Sigmoid colon (tissue), 7 donors: ENCODE measurements at regions of chr12 and their contacts with region 1.

Region 1: DNA sequence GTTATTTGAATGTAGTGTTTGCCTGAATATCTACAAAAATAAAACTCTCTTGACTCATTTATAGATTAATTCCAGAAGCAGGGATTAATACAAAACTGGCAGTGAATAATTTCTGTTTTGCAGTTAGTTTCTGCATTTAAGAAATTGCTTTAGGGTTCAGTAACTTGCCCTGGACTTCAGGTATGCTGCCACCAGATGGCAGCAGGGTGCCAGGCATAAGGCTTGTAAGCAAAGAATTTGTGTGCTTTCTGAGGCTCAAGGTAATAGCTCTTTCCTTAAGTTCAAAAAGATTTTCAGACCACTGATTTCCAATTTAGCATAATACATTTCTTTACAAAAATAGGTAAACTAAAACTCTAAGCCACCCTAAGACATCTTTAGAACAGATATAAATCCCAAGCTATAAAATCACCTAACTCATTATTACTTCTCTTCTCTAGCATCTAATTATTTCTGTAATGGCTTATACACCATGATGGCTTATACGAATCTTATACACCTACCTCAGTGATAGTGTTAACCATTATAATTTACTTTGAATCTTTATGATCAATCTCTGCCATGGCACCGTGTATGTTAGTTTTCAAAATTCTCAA is 398.3 kb downstream of the APAF1 start:
- DNase-seq: no peak
- H3K4me3 ChIP-seq: no peak overlapping the region
- H3K27ac ChIP-seq: no peak overlapping the region
- H3K4me1 ChIP-seq: no peaks in the 10 kb centered on the region
- H3K27me3 ChIP-seq: no peaks in the 10 kb centered on the region
- CTCF ChIP-seq: peak; percentile 29 to 84 (median 67)
- EP300 ChIP-seq: no peak
- POLR2A ChIP-seq: no peak

Region 2: DNA sequence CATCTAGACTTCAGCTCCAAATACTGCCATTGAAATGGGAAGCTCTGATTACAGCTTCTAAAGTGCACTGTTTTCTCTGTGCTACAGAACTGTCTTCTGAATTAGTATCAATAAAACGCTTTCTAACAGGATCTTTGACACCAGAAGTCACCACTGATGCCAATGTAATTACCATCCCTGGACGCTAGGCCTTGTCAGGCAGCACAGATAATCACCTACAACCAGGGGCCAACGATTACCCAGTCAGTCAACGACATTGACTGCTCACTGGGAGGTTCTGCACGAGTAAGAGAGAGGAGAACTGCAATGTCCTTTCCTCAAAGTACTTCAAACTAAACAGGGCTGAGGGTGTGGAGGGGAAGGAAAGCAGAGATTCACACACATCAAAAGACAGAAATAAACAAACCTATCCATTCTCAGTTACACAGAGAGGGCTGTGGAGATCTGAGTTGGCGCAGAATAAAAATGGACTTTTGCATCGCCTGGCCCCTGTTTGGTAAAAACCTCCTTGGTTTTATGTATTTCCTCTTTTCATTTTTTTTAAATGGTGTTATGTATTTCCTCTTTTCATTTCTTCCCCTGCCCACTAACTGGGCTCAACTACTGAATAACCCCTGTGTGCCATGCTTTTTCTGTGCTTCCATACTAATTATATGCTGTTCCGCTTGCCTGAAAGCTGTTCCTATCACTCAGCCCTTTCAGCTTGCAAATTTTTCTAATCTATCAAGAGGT is 93.9 kb after region 1 on chr12:
- intact Hi-C with region 1: no loop called
- DNase-seq: no peak
- H3K4me3 ChIP-seq: no peak overlapping the region
- H3K27ac ChIP-seq: no peak overlapping the region
- H3K4me1 ChIP-seq: no peaks in the 10 kb centered on the region
- H3K27me3 ChIP-seq: no peaks in the 10 kb centered on the region
- CTCF ChIP-seq: no peak
- EP300 ChIP-seq: no peak
- POLR2A ChIP-seq: no peak

Region 3: DNA sequence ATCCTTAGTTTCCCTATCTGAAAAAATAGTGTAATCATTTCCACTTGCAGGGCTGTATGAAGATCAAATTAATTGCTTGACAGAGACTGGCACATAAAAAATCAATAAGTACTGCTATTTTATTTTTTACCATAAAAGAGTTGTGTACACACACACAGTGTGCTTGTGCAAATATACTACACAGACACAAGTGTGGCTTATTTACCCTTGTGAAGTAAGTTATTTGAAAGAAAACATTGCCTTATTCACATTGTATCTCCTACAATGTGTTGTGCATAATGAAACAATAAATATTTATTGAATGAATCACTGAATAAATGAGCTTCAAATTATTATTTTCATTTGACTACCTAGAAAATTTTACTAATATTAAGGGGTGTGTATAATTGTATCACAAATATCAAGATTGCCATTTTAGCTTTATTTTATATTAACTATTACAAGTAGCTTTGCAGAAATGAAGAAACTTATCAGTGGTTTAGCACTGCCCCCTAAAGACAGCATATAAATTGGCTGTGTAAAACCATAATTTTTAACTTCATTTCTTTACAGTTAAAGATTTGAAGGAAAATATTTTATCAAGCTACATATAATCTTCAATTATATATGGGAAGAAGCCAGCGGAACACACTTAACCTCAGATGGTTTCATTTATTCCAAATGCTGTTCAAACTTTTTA is 615.4 kb after region 1 on chr12:
- intact Hi-C with region 1: loop called (anchors 5 kb)
- DNase-seq: no peak
- H3K4me3 ChIP-seq: no peak overlapping the region
- H3K27ac ChIP-seq: no peak overlapping the region
- H3K4me1 ChIP-seq: no peaks in the 10 kb centered on the region
- H3K27me3 ChIP-seq: no peaks in the 10 kb centered on the region
- CTCF ChIP-seq: no peak
- EP300 ChIP-seq: no peak
- POLR2A ChIP-seq: no peak

Region 4: GRCh38 chr12:99767809-99768208 is 724.4 kb after region 1 on chr12:
- intact Hi-C with region 1: loop called (anchors 2 kb)
- DNase-seq: no peak
- H3K4me3 ChIP-seq: peak overlapping the region; percentile 13 to 41 (median 22)
- H3K27ac ChIP-seq: no peak overlapping the region
- H3K4me1 ChIP-seq: peaks cover 0 to 3% (median 0%) of the 10 kb centered on the region in 4 donors
- H3K27me3 ChIP-seq: no peaks in the 10 kb centered on the region
- CTCF ChIP-seq: peak in 3 of 4 experiments; percentile 18 to 46 (median 19)
- EP300 ChIP-seq: no peak
- POLR2A ChIP-seq: no peak